AG04449 (cell line): ENCODE measurements at regions of chr6 and their contacts with region 1.

Region 1: DNA sequence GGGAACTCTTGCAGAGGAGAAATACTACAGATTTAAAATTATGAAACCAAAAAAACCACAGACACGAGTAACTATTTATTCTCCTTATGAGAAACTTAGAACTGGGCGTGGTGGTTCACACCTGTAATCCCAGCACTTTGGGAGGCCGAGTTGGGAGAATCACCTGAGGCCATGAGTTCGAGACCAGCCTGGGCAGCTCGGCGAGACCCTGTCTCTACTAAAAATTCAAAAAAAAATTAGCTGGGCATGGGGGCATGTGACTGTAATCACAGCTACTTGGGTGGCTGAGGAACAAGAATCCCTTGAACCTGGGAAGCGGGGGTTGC is 36.8 kb downstream of the SSR1 start:
- DNase-seq: no peak
- H3K4me3 ChIP-seq: no peak overlapping the region
- CTCF ChIP-seq: no peak

Region 2: GRCh38 chr6:6724539-6725467 is 551.4 kb before region 1 on chr6:
- CTCF ChIA-PET with region 1: interaction called, 30 read pairs
- POLR2A ChIA-PET with region 1: no interaction called
- DNase-seq: peak; percentile 26
- H3K4me3 ChIP-seq: peak overlapping the region; percentile 47
- CTCF ChIP-seq: peak; percentile 72

Region 3: GRCh38 chr6:7058250-7058923 is 217.8 kb before region 1 on chr6:
- CTCF ChIA-PET with region 1: no interaction called
- POLR2A ChIA-PET with region 1: no interaction called
- DNase-seq: peak; percentile 87
- H3K4me3 ChIP-seq: no peak overlapping the region
- CTCF ChIP-seq: no peak

Region 4: GRCh38 chr6:7261032-7261841 is 14.9 kb before region 1 on chr6:
- CTCF ChIA-PET with region 1: interaction called, 29 read pairs
- POLR2A ChIA-PET with region 1: interaction called, 3 read pairs
- DNase-seq: no peak
- H3K4me3 ChIP-seq: peak overlapping the region; percentile 77
- CTCF ChIP-seq: no peak

Region 5: GRCh38 chr6:7307533-7307932 is 31.4 kb after region 1 on chr6:
- CTCF ChIA-PET with region 1: interaction called, 11 read pairs
- POLR2A ChIA-PET with region 1: interaction called, 3 read pairs
- DNase-seq: no peak
- H3K4me3 ChIP-seq: no peak overlapping the region
- CTCF ChIP-seq: no peak

Region 6: DNA sequence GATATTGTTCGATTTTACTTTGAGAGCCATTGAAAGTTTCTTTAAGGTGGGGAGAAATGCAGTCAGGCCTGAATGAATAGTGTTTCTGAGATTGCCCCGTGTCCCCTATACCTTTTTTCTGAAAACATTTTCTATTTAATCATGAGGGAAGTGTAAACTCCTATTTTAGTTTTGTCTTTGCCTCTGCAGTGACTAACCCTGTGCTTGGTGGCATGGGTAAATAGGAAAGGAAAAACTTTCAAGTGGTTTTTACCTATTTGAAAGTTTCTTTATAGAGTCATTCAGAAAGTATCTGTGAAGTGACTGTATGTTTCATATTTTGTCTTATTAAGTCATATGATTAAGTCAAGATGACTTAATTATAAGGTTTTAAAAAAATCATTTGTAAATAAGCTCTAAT is 328.3 kb after region 1 on chr6:
- CTCF ChIA-PET with region 1: interaction called, 149 read pairs
- POLR2A ChIA-PET with region 1: no interaction called
- DNase-seq: no peak
- H3K4me3 ChIP-seq: no peak overlapping the region
- CTCF ChIP-seq: no peak

Region 7: DNA sequence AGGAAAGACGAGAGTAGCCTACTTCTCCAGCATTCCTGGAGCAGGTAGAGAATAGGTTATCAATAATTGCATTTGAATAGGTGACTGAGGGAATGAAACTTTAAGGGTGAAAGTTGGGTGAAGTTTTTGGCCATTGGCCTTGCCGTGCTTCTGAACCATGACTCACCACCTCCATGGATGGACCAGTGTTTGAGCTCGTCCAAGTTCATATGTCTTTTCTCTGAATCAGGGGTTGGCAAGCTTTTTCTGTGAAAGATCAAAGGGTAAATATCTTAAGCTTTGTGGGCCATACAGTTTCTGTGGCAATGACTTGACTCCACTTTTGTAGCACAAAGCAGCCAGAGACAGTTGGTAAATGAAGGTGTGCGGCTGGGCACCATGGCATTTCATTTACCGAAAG is 345.6 kb after region 1 on chr6:
- CTCF ChIA-PET with region 1: interaction called, 149 read pairs
- POLR2A ChIA-PET with region 1: interaction called, 3 read pairs
- DNase-seq: no peak
- H3K4me3 ChIP-seq: no peak overlapping the region
- CTCF ChIP-seq: no peak